GM10248 (cell line): ENCODE measurements at regions of chr4 and their contacts with region 1.

Region 1: GRCh38 chr4:152535903-152536544 is at the start of gene FBXW7:
- DNase-seq: peak; percentile 96
- CTCF ChIP-seq: no peak

Region 2: DNA sequence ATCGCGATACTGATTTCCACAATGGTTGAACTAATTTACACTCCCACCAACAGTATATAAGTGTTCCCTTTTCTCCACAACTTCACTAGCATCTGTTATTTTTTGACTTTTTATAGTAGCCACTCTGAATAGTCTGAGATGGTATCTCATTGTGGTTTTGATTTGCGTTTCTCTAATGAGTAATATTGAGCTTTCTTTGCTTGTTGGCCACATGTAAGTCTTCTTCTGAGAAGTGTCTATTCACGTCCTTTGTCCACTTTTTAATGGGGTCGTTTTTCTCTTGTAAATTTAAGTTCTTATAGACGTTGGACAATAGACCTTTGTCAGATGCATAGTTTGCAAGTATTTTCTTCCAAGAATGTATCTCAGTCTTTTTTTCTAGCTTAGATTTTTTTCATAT is 10.2 kb before region 1 on chr4:
- CTCF ChIA-PET with region 1: interaction called, 30 read pairs
- POLR2A ChIA-PET with region 1: interaction called, 9 read pairs
- DNase-seq: no peak
- CTCF ChIP-seq: no peak

Region 3: GRCh38 chr4:152556283-152556682 is 20.3 kb after region 1 on chr4:
- CTCF ChIA-PET with region 1: interaction called, 61 read pairs
- POLR2A ChIA-PET with region 1: interaction called, 7 read pairs
- DNase-seq: no peak
- CTCF ChIP-seq: no peak

Region 4: GRCh38 chr4:152577708-152578396 is 41.8 kb after region 1 on chr4:
- CTCF ChIA-PET with region 1: interaction called, 14 read pairs
- POLR2A ChIA-PET with region 1: no interaction called
- DNase-seq: no peak
- CTCF ChIP-seq: no peak

Region 5: GRCh38 chr4:152655272-152656129 is 119.5 kb after region 1 on chr4:
- CTCF ChIA-PET with region 1: no interaction called
- POLR2A ChIA-PET with region 1: no interaction called
- DNase-seq: no peak
- CTCF ChIP-seq: no peak

Region 6: DNA sequence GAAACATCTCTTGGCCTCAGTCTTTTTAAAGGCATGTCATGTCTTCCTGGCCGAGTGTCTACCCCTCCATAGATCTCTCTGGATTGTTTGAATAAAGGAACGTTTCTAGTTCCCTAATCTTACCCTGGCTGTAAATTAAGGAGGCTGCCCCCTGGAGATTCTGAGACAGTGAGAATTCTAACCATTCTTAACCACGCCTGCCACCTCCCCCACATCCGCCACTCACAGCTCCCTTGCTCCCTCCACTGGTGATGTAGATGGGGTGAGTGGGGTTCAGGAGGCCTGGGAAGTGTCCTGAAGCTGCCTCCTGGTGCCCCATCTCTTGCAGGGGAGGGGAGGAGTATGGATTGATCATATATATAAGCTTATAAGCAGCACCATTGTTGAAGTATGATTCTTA is 620.2 kb after region 1 on chr4:
- CTCF ChIA-PET with region 1: no interaction called
- POLR2A ChIA-PET with region 1: no interaction called
- DNase-seq: no peak
- CTCF ChIP-seq: peak; percentile 29